Mammary epithelial cell (primary cell): ENCODE measurements at regions of chr13 and their contacts with region 1.

Region 1: DNA sequence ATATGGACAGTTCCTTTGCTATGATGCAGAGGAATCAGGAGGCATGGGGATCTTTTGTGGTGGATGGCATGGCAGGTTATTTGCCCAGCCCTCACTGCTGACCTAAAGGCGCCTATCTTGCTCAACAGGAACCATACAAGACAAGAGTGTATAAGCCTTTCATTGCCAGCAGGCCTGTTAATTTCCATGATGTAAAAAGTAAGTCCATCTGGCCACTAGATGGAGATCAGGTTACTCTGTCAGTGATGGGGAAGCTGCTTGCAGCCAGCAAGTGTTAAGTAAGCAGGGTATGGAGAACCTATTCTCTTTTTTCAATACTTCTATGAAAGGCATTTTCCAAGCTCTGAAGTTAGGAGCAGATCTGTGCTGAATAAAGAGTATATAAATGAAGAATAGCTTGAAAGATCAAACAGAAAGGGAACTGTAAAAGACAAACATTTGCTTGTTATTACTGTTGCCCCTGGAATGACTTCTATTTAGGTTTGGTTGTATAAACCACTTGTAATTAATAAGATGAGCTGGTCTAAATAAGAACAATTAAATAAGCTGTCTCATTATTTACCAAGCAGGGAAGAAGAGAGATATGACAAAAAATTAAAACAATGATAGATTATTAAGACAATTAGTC is 210.9 kb downstream of the RGCC start:
- DNase-seq: peak; percentile 82
- H3K4me3 ChIP-seq: no peak overlapping the region
- H3K27ac ChIP-seq: no peak overlapping the region
- H3K4me1 ChIP-seq: no peaks in the 10 kb centered on the region
- H3K27me3 ChIP-seq: no peaks in the 10 kb centered on the region
- CTCF ChIP-seq: peak; percentile 76 to 90

Region 2: GRCh38 chr13:41411522-41411921 is 256.7 kb before region 1 on chr13:
- CTCF ChIA-PET with region 1: no interaction called
- dilution Hi-C with region 1: no loop called
- in situ Hi-C with region 1: loop called in 1 of 2 experiments (anchors 25 kb)
- intact Hi-C with region 1: no loop called
- DNase-seq: peak; percentile 42
- H3K4me3 ChIP-seq: no peak overlapping the region
- H3K27ac ChIP-seq: no peak overlapping the region
- H3K4me1 ChIP-seq: peaks cover 12% of the 10 kb centered on the region
- H3K27me3 ChIP-seq: no peaks in the 10 kb centered on the region
- CTCF ChIP-seq: peak; percentile 12 to 57

Region 3: GRCh38 chr13:41848435-41849255 is 180.4 kb after region 1 on chr13:
- CTCF ChIA-PET with region 1: no interaction called
- dilution Hi-C with region 1: no loop called
- in situ Hi-C with region 1: no loop called
- intact Hi-C with region 1: loop called (anchors 1 kb)
- DNase-seq: peak; percentile 9
- H3K4me3 ChIP-seq: no peak overlapping the region
- H3K27ac ChIP-seq: no peak overlapping the region
- H3K4me1 ChIP-seq: no peaks in the 10 kb centered on the region
- H3K27me3 ChIP-seq: no peaks in the 10 kb centered on the region
- CTCF ChIP-seq: peak in 1 of 2 donors; percentile 38

Region 4: DNA sequence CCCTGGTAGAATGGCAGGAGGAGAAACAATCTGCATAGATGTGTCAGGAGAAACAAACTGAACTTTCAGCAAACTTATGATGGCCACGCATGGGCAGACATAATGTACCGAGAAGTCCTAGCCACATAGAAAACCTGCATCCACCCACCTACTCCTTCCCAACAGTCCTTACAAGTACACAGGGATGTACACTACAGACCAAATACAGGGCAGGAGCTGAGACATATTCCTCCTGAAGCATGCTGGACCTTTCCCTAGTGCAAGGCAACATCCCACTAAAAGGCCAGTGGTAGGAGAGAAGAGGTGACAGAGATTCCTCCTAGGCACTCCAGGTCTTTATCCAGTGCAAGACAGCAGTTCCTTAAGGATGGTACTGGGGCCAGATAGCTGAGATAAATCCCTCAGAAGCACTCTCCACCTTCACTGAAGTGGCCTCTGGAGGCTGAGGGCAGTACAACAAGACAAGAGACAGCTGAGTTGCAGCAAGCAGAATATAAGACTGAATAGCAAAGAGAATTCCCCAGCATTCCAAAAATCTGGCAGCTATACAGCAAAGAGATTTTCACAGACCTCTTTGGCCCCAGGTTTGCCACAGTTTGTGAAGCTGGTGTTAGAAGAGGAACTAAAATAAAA is 274.3 kb after region 1 on chr13:
- CTCF ChIA-PET with region 1: no interaction called
- dilution Hi-C with region 1: no loop called
- in situ Hi-C with region 1: no loop called
- intact Hi-C with region 1: loop called (anchors 2 kb)
- DNase-seq: peak; percentile 34
- H3K4me3 ChIP-seq: no peak overlapping the region
- H3K27ac ChIP-seq: no peak overlapping the region
- H3K4me1 ChIP-seq: no peaks in the 10 kb centered on the region
- H3K27me3 ChIP-seq: no peaks in the 10 kb centered on the region
- CTCF ChIP-seq: peak; percentile 26 to 65

Region 5: GRCh38 chr13:42039946-42040729 is 371.9 kb after region 1 on chr13:
- CTCF ChIA-PET with region 1: no interaction called
- dilution Hi-C with region 1: no loop called
- in situ Hi-C with region 1: no loop called
- intact Hi-C with region 1: loop called (anchors 1 kb)
- DNase-seq: peak; percentile 81
- H3K4me3 ChIP-seq: peak overlapping the region; percentile 45 to 92 (median 67)
- H3K27ac ChIP-seq: peak overlapping the region; percentile 63
- H3K4me1 ChIP-seq: peaks cover 14% of the 10 kb centered on the region
- H3K27me3 ChIP-seq: no peaks in the 10 kb centered on the region
- CTCF ChIP-seq: peak in 1 of 2 donors; percentile 16

Region 6: DNA sequence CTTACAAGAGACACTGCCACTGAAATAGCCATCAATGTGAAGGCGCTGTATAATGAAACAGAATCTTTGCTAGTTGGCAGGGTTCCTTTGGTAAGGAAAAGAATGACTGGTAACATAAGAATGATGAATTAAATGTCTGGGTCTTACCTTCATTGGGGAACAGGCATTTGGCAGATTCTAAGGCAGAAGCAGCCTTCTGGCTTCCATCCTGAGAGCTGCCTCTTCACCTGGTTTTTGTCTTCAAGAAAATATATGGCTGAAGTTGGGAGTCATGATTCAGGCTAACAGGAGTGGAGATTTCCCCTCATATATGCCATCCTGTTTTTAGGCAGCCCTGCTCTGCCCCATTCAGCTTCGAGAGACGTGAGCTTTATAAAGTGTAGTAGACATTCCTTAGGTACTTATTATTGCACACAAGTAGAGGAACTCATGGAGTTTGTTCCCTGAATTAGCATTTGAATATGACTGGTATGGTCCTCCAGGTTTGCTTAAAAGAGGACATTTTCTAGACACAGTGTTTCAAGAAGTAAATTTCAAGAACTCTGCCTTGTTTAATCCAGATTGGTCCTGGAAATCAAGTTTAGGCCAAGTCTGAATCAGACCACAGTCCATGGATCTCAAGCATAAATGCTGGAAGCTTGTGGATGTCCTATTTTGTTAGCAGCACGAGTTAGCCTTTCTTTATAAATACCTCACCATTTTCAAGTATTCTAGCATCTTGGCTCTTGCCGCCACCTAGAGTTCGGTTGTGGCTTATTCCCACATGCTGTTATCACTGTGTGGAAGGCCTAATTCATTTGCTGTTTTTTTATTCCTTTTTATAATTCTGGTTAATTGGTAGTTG is 547.6 kb after region 1 on chr13:
- CTCF ChIA-PET with region 1: no interaction called
- dilution Hi-C with region 1: no loop called
- in situ Hi-C with region 1: no loop called
- intact Hi-C with region 1: loop called (anchors 5 kb)
- DNase-seq: peak; percentile 16
- H3K4me3 ChIP-seq: no peak overlapping the region
- H3K27ac ChIP-seq: no peak overlapping the region
- H3K4me1 ChIP-seq: peaks cover 10% of the 10 kb centered on the region
- H3K27me3 ChIP-seq: no peaks in the 10 kb centered on the region
- CTCF ChIP-seq: peak; percentile 42 to 55